ENCODE measurements at regions of chr17 and their contacts with region 1.

Region 1: DNA sequence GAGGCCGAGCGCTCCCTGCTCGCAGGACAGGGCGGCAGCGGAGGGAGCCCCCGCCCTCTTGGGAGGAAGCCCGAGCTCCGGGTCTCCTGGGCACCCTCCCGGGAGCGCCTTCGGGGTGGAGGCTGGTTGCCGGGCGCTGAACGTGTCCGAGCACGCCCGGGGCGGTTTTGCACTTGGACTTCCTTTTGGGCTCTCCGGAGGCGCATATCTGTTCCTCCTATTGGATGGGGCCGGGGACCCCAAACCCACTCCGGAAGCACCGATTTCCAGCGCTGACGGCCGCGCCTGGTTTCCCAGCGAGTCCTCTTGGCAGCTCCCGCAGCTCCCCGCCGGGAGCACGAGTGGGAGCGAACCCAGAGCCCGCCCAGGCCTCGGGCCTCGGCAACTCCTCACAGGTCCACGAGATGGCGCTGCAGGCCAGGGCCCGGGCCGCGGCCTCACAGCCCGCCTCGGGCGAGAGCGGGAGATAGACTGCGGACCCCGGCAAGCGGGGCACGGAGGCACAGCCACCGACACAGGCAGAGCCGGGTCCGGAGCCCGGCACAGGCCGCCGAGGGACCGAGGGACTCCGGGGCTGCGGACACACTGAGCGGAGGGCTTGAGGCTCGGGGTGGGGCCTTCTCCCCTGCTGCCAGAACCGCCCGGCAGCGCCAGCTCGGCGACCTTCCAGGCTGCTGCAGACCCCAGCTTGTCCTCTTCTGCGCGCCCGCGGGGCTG is 12.7 kb downstream of the TBX2 start:
- DNase-seq: peak; percentile 70
- H3K4me3 ChIP-seq: peak overlapping the region; percentile 6 to 43 (median 31)
- H3K27ac ChIP-seq: no peak overlapping the region
- H3K4me1 ChIP-seq: peaks cover 14% of the 10 kb centered on the region
- H3K27me3 ChIP-seq: peaks cover 34 to 37% of the 10 kb centered on the region in 2 experiments
- CTCF ChIP-seq: peak; percentile 94 to 99
- POLR2A ChIP-seq: no peak

Region 2: DNA sequence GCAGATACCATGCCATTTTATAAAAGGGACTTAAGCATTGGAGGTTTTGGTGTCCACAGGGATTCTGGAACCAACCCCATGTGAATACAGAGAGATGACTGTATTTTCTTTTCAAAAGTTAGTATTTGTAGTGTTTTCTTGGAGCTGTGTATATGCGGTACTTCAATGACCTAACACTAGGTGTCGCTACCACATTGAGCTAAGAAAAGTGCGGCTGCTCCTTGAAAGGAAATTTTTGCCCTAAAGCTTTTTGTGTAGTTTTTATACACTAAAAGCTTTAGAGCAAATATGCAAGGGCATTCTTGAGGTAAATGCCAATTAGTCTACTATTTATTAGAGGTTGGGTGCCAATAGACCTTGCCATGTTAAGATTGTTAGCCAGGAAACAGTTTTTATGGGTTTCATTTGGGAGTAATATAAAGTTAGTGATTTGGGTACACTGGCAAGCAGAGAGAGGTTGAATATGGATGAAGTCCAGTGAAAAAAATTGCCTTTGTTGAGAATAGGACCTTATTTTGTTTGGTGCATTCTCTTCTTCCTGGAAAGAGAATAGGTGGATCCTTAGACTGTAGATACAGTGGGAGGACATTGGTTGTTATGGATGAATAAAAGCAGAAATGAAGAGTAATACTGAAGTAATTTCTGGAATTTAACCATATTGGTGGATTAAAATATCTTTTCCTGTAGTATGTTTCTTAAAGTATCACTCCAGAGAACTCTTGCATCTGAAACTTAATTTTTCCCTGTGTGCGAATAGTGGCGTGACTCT is 691.4 kb before region 1 on chr17:
- CTCF ChIA-PET with region 1: interaction called, 53 read pairs
- POLR2A ChIA-PET with region 1: no interaction called
- dilution Hi-C with region 1: no loop called
- intact Hi-C with region 1: loop called (anchors 1 kb)
- DNase-seq: peak; percentile 68
- H3K4me3 ChIP-seq: no peak overlapping the region
- H3K27ac ChIP-seq: no peak overlapping the region
- H3K4me1 ChIP-seq: no peaks in the 10 kb centered on the region
- H3K27me3 ChIP-seq: no peaks in the 10 kb centered on the region
- CTCF ChIP-seq: peak; percentile 73 to 76
- POLR2A ChIP-seq: no peak

Region 3: DNA sequence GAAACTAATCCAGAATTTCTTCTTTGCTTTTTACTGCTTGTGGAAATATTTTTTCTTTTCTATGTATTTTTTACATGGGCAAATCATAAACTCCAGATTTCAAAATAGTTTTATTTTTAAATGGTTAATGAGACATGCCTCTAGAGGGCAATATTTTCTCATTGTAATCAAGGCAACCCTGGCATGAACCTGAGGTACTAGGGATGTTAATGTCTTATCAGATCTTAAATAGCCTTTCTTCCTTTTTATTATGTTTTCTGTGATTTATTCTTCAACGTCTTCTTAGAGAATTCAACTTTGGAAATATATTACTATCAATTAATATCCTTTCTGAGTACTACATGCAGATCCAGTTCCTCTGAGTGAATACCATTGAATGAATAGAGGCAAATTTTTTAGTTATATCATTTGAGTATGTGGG is 410.0 kb before region 1 on chr17:
- CTCF ChIA-PET with region 1: interaction called, 6 read pairs
- POLR2A ChIA-PET with region 1: no interaction called
- dilution Hi-C with region 1: no loop called
- intact Hi-C with region 1: loop called (anchors 1 kb)
- DNase-seq: peak; percentile 46
- H3K4me3 ChIP-seq: no peak overlapping the region
- H3K27ac ChIP-seq: no peak overlapping the region
- H3K4me1 ChIP-seq: no peaks in the 10 kb centered on the region
- H3K27me3 ChIP-seq: peaks cover 1 to 6% of the 10 kb centered on the region in 2 experiments
- CTCF ChIP-seq: peak in 1 of 2 donors; percentile 20
- POLR2A ChIP-seq: no peak

Region 4: DNA sequence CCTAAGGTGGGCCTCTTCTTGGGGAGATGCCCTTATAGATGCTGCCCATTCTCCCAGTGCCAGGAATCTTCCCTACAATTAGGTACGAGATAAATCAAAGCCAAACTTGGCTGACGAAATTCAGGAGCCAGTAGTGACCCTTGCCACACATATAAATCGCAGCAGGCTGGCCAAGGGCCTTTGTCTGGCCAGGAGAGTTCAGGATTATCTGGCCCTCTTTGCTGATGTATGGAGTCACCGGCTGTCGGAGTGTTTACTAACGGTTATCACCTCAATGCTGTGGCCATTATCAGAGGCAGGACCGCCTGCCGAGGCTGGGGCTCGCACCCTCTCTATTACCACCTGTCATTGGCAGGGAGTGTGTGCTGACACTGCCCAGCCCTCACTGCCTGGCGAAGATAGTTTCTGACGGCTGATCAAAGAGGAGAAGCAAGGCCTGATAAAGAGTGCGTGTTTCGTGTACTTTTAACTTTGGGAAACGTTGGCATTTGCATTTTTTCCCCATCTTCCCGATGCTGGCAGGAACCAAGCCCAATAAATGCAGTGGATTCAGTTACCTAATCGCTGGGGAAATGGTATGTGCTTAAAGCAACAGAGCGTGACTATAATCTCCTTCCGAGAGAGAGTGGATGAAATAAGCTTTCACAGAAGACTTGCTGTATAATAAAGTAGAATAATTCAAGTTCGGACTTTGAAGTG is 45.4 kb before region 1 on chr17:
- CTCF ChIA-PET with region 1: no interaction called
- POLR2A ChIA-PET with region 1: no interaction called
- dilution Hi-C with region 1: no loop called
- intact Hi-C with region 1: no loop called
- DNase-seq: no peak
- H3K4me3 ChIP-seq: no peak overlapping the region
- H3K27ac ChIP-seq: no peak overlapping the region
- H3K4me1 ChIP-seq: no peaks in the 10 kb centered on the region
- H3K27me3 ChIP-seq: peaks cover 3 to 13% of the 10 kb centered on the region in 2 experiments
- CTCF ChIP-seq: no peak
- POLR2A ChIP-seq: no peak

Region 5: DNA sequence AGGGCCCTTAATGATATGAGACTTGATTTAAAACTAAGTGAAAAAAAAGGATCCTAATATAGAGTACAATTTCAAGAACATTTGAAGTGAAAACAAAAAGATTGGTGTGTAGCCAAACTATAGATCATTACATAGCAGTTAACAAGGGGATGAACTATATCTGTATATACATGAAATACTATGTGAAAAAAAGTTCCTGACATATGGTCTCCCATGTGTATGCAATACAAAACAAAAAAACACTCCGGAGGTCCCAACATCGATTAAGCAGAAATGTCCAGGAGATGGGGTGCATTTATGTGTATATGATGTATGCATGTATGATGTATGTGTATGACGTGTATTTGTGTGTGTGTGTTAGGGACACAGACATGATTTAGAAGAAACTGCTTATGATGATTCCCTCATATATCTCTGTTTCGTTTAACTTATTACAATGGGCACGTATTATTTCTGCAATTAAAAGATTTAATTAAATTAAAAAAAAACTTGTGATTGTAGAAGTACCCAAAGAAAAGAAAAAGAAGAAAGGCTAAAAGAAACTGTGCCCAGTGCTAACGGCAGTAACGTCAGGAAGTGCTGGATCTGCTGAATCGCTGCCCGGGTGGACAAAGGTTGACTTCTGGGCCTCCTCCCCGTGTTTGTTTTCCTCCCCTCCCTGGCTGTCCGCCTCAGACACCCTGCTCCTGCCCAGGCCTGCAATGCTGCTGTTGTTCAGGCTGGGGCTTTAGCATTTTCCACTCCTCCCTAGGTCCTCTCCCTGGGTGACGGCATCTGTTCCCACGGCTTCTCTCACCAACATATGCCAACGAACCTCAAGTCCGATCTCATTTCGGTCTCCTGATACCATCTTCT is 76.8 kb after region 1 on chr17:
- CTCF ChIA-PET with region 1: no interaction called
- POLR2A ChIA-PET with region 1: no interaction called
- dilution Hi-C with region 1: no loop called
- intact Hi-C with region 1: no loop called
- DNase-seq: no peak
- H3K4me3 ChIP-seq: no peak overlapping the region
- H3K27ac ChIP-seq: no peak overlapping the region
- H3K4me1 ChIP-seq: no peaks in the 10 kb centered on the region
- H3K27me3 ChIP-seq: peaks cover 5 to 7% of the 10 kb centered on the region in 2 experiments
- CTCF ChIP-seq: no peak
- POLR2A ChIP-seq: no peak

Region 6: DNA sequence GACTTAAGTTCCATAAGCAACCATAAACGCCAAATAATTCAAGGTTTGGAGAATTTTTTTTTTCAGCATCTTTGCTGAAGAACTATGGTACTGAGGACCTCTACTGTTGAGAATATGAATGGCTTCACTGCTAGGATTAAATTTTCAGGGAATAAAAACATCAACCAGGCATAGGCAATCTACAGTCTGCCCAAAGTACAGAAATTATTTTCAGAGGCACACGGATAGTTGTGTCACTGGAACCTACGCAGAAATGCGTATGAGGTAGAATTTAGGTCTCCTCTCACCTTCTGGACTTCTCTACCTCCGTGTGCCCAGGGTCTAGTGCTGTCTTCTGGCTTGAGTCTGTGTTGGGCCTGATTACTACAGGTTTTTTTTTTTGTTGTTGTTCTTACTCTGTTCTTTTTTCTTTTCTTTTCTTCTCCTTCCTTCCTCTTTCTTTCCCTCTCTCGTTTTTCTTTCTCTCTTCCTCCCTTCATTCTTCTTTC is 139.0 kb after region 1 on chr17:
- CTCF ChIA-PET with region 1: interaction called, 66 read pairs
- POLR2A ChIA-PET with region 1: no interaction called
- dilution Hi-C with region 1: no loop called
- intact Hi-C with region 1: loop called (anchors 1 kb)
- DNase-seq: peak; percentile 55
- H3K4me3 ChIP-seq: no peak overlapping the region
- H3K27ac ChIP-seq: no peak overlapping the region
- H3K4me1 ChIP-seq: no peaks in the 10 kb centered on the region
- H3K27me3 ChIP-seq: peaks cover 5 to 43% of the 10 kb centered on the region in 2 experiments
- CTCF ChIP-seq: peak; percentile 46 to 47
- POLR2A ChIP-seq: no peak

Region 7: DNA sequence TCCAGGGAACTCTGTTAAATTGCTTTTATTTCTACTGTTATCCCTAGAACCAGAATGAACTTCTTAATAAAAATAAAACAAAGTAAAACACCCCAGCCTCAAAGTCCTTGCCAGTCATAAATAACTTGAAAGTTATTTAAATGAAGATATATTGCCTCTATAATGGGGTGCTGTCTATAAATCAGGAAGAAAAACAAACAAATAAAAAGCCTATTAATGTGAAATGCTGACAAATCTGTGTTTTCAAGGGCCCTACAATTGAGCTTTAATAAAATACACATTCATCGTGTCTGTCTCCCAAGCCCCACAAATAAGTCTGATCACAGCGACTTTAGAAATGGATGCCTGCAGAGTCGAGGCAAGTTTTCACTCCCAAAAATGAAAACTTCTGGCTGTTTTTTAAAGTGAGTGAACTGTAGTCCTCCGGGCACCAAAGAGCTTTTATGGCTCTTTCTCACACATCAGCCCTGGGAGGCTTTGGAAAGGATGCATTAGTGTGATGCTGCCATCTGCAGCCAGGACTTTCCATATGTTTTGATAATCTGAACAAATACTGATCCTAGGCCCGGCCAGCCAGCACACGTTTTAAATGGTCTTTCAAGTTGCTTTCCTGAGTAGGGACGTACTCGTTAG is 162.4 kb after region 1 on chr17:
- CTCF ChIA-PET with region 1: interaction called, 47 read pairs
- POLR2A ChIA-PET with region 1: no interaction called
- dilution Hi-C with region 1: no loop called
- intact Hi-C with region 1: loop called (anchors 2 kb)
- DNase-seq: peak; percentile 16
- H3K4me3 ChIP-seq: no peak overlapping the region
- H3K27ac ChIP-seq: no peak overlapping the region
- H3K4me1 ChIP-seq: no peaks in the 10 kb centered on the region
- H3K27me3 ChIP-seq: peaks cover 4 to 21% of the 10 kb centered on the region in 2 experiments
- CTCF ChIP-seq: no peak
- POLR2A ChIP-seq: no peak

Region 8: GRCh38 chr17:61635913-61636432 is 223.7 kb after region 1 on chr17:
- CTCF ChIA-PET with region 1: interaction called, 5 read pairs
- POLR2A ChIA-PET with region 1: no interaction called
- dilution Hi-C with region 1: no loop called
- intact Hi-C with region 1: loop called (anchors 2 kb)
- DNase-seq: peak; percentile 69
- H3K4me3 ChIP-seq: no peak overlapping the region
- H3K27ac ChIP-seq: no peak overlapping the region
- H3K4me1 ChIP-seq: no peaks in the 10 kb centered on the region
- H3K27me3 ChIP-seq: peaks cover 2 to 7% of the 10 kb centered on the region in 2 experiments
- CTCF ChIP-seq: peak; percentile 56 to 64
- POLR2A ChIP-seq: no peak

Region 9: GRCh38 chr17:62065598-62066468 is 653.5 kb after region 1 on chr17:
- CTCF ChIA-PET with region 1: interaction called, 9 read pairs
- POLR2A ChIA-PET with region 1: no interaction called
- dilution Hi-C with region 1: no loop called
- intact Hi-C with region 1: loop called (anchors 1 kb)
- DNase-seq: peak; percentile 98
- H3K4me3 ChIP-seq: peak overlapping the region; percentile 68 to 100 (median 95)
- H3K27ac ChIP-seq: peak overlapping the region; percentile 98
- H3K4me1 ChIP-seq: peaks cover 19% of the 10 kb centered on the region
- H3K27me3 ChIP-seq: no peaks in the 10 kb centered on the region
- CTCF ChIP-seq: peak; percentile 93 to 94
- POLR2A ChIP-seq: peak; percentile 95